CD8-positive, alpha-beta T cell (primary cell): ENCODE measurements at regions of chr20 and their contacts with region 1.

Region 1: GRCh38 chr20:50070991-50071888 is 41.7 kb downstream of the UBE2V1 start:
- DNase-seq: peak; percentile 83 to 98 (median 91)
- ATAC-seq: peak; percentile 100
- H3K4me3 ChIP-seq: peak overlapping the region; percentile 29 to 38
- H3K4me3 Mint-ChIP-seq: peak overlapping the region; percentile 63
- H3K27ac ChIP-seq: no peak overlapping the region
- H3K27ac Mint-ChIP-seq: no peak overlapping the region
- H3K4me1 ChIP-seq: no peaks in the 10 kb centered on the region
- H3K4me1 Mint-ChIP-seq: peaks cover 4% of the 10 kb centered on the region
- H3K27me3 ChIP-seq: no peaks in the 10 kb centered on the region
- H3K27me3 Mint-ChIP-seq: no peaks in the 10 kb centered on the region
- CTCF ChIP-seq: peak; percentile 98

Region 2: GRCh38 chr20:49330544-49331239 is 740.5 kb before region 1 on chr20:
- CTCF ChIA-PET with region 1: no interaction called
- POLR2A ChIA-PET with region 1: no interaction called
- intact Hi-C with region 1: loop called in 1 of 2 experiments (anchors 5 kb)
- DNase-seq: no peak
- ATAC-seq: no peak
- H3K4me3 ChIP-seq: no peak overlapping the region
- H3K4me3 Mint-ChIP-seq: no peak overlapping the region
- H3K27ac ChIP-seq: no peak overlapping the region
- H3K27ac Mint-ChIP-seq: no peak overlapping the region
- H3K4me1 ChIP-seq: no peaks in the 10 kb centered on the region
- H3K4me1 Mint-ChIP-seq: no peaks in the 10 kb centered on the region
- H3K27me3 ChIP-seq: peaks cover 3% of the 10 kb centered on the region in 2 experiments
- H3K27me3 Mint-ChIP-seq: peaks cover 28% of the 10 kb centered on the region
- CTCF ChIP-seq: no peak

Region 3: GRCh38 chr20:49982346-49983122 is 88.7 kb before region 1 on chr20 and contains the start of gene SNAI1:
- CTCF ChIA-PET with region 1: interaction called, 343 read pairs
- POLR2A ChIA-PET with region 1: interaction called, 12 read pairs
- intact Hi-C with region 1: loop called (anchors 1 kb)
- DNase-seq: peak; percentile 65 to 94 (median 82)
- ATAC-seq: peak; percentile 92
- H3K4me3 ChIP-seq: peak within 1 kb of the TSS; percentile 35 to 51
- H3K4me3 Mint-ChIP-seq: peak within 1 kb of the TSS; percentile 72
- H3K27ac ChIP-seq: peak within 1 kb of the TSS in 1 of 2 experiments; percentile 51
- H3K27ac Mint-ChIP-seq: peak within 1 kb of the TSS; percentile 79
- H3K4me1 ChIP-seq: peaks cover 24% of the 10 kb centered on the region
- H3K4me1 Mint-ChIP-seq: peaks cover 28% of the 10 kb centered on the region
- H3K27me3 ChIP-seq: no peaks in the 10 kb centered on the region
- H3K27me3 Mint-ChIP-seq: no peaks in the 10 kb centered on the region
- CTCF ChIP-seq: peak; percentile 55
- total RNA-seq, gene SNAI1: 3.0 to 3.1 TPM

Region 4: DNA sequence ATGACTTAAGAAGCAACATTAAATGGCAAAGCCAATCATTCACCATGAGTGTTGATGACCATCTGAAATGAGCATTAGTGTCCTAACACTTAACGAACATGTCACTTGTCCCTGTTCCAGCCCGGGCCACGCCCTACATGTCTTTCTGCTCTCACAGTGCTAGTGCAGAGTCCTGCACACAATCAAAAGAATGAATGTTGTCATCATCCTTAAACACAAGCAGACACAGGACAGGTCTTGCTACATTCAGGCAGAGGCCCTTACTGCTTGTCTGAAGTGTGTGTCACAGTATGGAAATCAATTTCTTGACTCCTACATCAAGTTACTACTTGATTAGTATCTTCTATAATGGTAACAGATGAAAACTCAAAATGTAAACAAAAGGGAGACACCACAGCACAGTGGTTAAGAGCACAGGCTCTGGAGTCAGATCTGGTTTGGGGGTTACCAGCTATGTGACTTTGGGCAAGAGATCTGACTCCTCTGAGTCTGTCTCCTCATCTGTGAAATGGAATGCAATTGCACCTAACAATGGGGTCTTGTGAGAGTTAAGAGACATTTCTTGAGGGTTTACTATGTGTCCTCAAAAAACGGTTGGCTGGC is 24.3 kb after region 1 on chr20:
- CTCF ChIA-PET with region 1: interaction called, 29 read pairs
- POLR2A ChIA-PET with region 1: no interaction called
- intact Hi-C with region 1: no loop called
- DNase-seq: no peak
- ATAC-seq: no peak
- H3K4me3 ChIP-seq: no peak overlapping the region
- H3K4me3 Mint-ChIP-seq: no peak overlapping the region
- H3K27ac ChIP-seq: no peak overlapping the region
- H3K27ac Mint-ChIP-seq: peak overlapping the region; percentile 32
- H3K4me1 ChIP-seq: peaks cover 9% of the 10 kb centered on the region
- H3K4me1 Mint-ChIP-seq: peaks cover 42% of the 10 kb centered on the region
- H3K27me3 ChIP-seq: no peaks in the 10 kb centered on the region
- H3K27me3 Mint-ChIP-seq: no peaks in the 10 kb centered on the region
- CTCF ChIP-seq: no peak

Region 5: GRCh38 chr20:50110141-50110925 is 39.1 kb after region 1 on chr20:
- CTCF ChIA-PET with region 1: interaction called, 11 read pairs
- POLR2A ChIA-PET with region 1: no interaction called
- intact Hi-C with region 1: loop called in 1 of 2 experiments (anchors 2 kb)
- DNase-seq: peak in 8 of 9 experiments; percentile 9 to 91 (median 56)
- ATAC-seq: peak; percentile 37
- H3K4me3 ChIP-seq: peak overlapping the region; percentile 7 to 21
- H3K4me3 Mint-ChIP-seq: peak overlapping the region; percentile 97
- H3K27ac ChIP-seq: peak overlapping the region; percentile 31 to 83
- H3K27ac Mint-ChIP-seq: peak overlapping the region; percentile 88
- H3K4me1 ChIP-seq: peaks cover 72% of the 10 kb centered on the region
- H3K4me1 Mint-ChIP-seq: peaks cover 87% of the 10 kb centered on the region
- H3K27me3 ChIP-seq: no peaks in the 10 kb centered on the region
- H3K27me3 Mint-ChIP-seq: no peaks in the 10 kb centered on the region
- CTCF ChIP-seq: no peak

Region 6: GRCh38 chr20:50320910-50321796 is 249.9 kb after region 1 on chr20:
- CTCF ChIA-PET with region 1: no interaction called
- POLR2A ChIA-PET with region 1: no interaction called
- intact Hi-C with region 1: no loop called
- DNase-seq: peak in 1 of 9 experiments; percentile 12
- ATAC-seq: no peak
- H3K4me3 ChIP-seq: no peak overlapping the region
- H3K4me3 Mint-ChIP-seq: no peak overlapping the region
- H3K27ac ChIP-seq: no peak overlapping the region
- H3K27ac Mint-ChIP-seq: no peak overlapping the region
- H3K4me1 ChIP-seq: no peaks in the 10 kb centered on the region
- H3K4me1 Mint-ChIP-seq: no peaks in the 10 kb centered on the region
- H3K27me3 ChIP-seq: no peaks in the 10 kb centered on the region
- H3K27me3 Mint-ChIP-seq: peaks cover 17% of the 10 kb centered on the region
- CTCF ChIP-seq: no peak